ENCODE measurements at regions of chr21 and their contacts with region 1.

Region 1: DNA sequence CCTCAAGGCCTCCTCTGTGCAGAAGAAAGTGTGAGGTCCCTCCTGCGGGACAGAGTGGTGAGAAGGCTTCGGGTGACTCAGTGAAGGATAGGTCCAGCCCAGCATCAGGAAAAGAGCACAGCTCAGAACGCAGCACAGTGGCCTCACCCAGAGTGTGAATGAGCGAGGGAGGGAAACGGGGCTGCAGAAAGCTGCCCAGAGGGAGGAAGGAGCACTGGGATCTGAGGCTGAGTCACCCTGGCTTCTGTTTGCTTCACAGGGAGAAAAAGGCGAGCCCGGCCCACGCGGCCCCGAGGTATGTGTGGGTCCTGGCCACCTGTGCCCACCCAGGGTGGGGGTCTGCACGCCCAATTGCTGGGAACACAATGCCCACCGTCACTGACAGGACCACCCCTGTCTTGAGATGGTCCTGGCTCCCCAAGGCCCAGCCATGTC is 24.3 kb downstream of the COL6A2 start:
- DNase-seq: peak; percentile 1
- ATAC-seq: no peak

Region 2: GRCh38 chr21:45505416-45506021 is 616.7 kb before region 1 on chr21:
- intact Hi-C with region 1: no loop called
- DNase-seq: peak in 1 of 2 donors; percentile 51
- ATAC-seq: peak; percentile 51

Region 3: GRCh38 chr21:45981151-45982089 is 140.8 kb before region 1 on chr21 and contains the start of gene COL6A1:
- intact Hi-C with region 1: loop called in 1 of 2 experiments (anchors 10 kb)
- DNase-seq: peak; percentile 61 to 75
- ATAC-seq: peak; percentile 67
- total RNA-seq, gene COL6A1: 32.2 to 111 TPM

Region 4: GRCh38 chr21:46171996-46172862 is 50.0 kb after region 1 on chr21:
- intact Hi-C with region 1: no loop called
- DNase-seq: no peak
- ATAC-seq: no peak

Measured in left colon (tissue), 2 donors.